Left ventricle myocardium inferior (tissue), 1 donor: ENCODE measurements at regions of chr1 and their contacts with region 1.

Region 1: DNA sequence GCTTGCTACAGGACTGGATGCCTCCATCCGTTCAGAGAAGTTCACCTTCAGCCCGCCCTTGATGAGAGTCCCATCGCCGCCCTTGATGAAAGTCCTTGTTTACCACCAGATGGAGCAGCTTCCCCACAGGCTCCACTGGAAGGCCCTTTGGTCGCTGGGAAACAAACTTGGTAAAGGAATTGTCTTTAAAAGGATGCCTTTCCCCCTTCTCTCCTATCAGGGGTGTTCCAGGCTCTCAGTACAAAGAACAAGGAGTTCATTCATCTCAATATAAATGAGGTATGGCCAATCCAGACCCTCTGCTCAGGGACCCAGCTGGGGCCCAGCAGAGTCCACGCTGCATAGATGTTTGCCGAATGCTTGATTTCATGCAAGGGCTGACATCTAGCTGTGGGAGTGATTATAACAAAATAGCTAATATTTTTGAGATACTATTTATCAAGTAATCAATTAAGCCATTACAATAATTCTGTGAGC is 50.8 kb downstream of the CAPN9 start:
- DNase-seq: peak; percentile 41
- H3K4me3 ChIP-seq: no peak overlapping the region
- H3K27ac ChIP-seq: no peak overlapping the region
- H3K4me1 ChIP-seq: no peaks in the 10 kb centered on the region
- H3K27me3 ChIP-seq: no peaks in the 10 kb centered on the region
- CTCF ChIP-seq: peak; percentile 88

Region 2: DNA sequence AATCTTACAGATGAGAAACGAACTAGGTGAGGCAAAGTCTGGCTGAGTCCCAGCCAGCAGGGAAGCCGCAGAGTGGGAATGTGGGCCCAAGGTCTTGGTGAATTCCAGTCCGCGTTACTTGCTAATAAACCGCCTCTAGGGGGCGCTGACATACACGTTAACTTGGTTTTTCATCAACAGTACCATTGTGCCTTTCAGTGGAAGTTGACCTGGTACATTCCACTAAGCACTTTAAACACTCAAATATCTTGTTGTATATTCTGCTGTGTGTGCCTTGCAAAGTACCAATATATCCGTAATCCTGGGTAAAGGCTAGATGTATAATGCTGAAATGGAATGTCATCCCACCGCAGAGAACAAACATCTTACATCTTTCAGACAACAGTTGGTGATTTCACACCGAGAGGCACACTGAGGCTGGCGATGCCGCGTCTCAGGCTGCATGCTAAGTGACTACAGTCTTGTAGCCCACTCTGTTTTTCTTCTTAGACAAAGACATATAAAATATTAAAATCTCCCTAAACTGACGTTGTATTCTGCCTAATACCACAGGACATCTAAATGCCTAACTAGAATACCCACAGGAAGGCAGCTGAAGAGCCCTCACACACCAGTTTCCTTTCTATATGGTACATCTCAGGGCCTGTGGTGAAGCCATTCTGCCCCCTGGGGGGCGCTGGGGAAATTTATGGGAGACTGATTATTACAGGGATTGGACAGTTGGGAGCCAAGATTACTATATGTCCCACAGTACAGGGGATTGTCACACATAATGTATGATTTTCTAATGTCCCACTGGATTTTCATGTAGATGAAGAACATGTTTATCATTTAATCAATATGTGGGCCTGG is 119.5 kb after region 1 on chr1:
- intact Hi-C with region 1: loop called (anchors 5 kb)
- DNase-seq: peak; percentile 63
- H3K4me3 ChIP-seq: no peak overlapping the region
- H3K27ac ChIP-seq: no peak overlapping the region
- H3K4me1 ChIP-seq: no peaks in the 10 kb centered on the region
- H3K27me3 ChIP-seq: no peaks in the 10 kb centered on the region
- CTCF ChIP-seq: peak; percentile 62

Region 3: DNA sequence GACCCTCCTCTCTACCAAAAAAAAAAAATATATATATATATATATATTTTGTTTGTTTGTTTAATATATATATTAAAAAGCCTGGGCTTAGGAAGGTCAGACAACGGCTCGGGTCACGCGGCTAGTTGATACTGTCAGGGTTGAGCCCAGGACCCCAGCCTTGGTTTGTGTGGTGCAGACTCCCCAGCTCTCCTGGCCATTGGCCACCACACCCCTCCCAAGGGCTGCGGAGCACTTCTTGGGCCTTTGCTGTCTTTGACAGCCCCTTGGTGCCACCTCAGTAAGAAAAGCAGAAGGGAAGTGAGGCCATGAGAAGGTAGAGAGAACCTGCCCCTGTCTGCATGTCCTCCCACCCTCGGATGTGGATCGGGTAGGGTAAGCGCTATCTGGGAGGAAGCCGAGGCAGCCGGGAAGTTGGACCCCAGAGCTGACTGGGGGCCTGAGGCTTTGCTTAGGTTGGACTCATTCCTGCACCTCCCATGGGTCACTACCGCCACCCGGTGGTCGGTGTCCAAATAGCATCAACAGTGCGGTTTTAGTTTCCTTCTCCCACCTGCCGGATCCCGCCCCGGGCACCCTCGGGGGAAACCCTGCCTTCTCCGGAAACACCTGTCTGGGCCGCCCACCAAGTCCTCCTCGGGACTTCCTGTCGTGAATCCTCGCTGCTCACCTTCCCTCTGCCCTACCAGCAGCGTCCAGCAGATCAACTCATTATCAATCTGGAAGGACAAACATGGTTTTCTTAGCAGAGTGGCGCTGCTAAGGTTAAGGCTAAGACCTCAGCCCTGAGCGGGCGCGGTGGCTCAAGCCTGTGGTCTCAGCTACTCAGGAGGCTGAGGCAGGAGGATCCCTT is 413.3 kb after region 1 on chr1:
- intact Hi-C with region 1: loop called (anchors 5 kb)
- DNase-seq: peak; percentile 75
- H3K4me3 ChIP-seq: peak overlapping the region; percentile 59
- H3K27ac ChIP-seq: no peak overlapping the region
- H3K4me1 ChIP-seq: peaks cover 8% of the 10 kb centered on the region
- H3K27me3 ChIP-seq: peaks cover 38% of the 10 kb centered on the region
- CTCF ChIP-seq: peak; percentile 94